Naive thymus-derived CD4-positive, alpha-beta T cell (primary cell): ENCODE measurements at regions of chr7 and their contacts with region 1.

Region 1: GRCh38 chr7:138459413-138460175 is 465 bp upstream of the TRIM24 start:
- DNase-seq: peak; percentile 95 to 99 (median 98)
- ATAC-seq: peak; percentile 92
- H3K4me3 ChIP-seq: peak overlapping the region; percentile 35
- H3K4me3 Mint-ChIP-seq: peak overlapping the region; percentile 78 to 96 (median 87)
- H3K27ac ChIP-seq: peak overlapping the region; percentile 34
- H3K27ac Mint-ChIP-seq: peak overlapping the region; percentile 0 to 83 (median 61)
- H3K4me1 ChIP-seq: peaks cover 6 to 9% of the 10 kb centered on the region in 2 donors
- H3K4me1 Mint-ChIP-seq: peaks cover 14 to 38% (median 31%) of the 10 kb centered on the region in 7 donors
- H3K27me3 ChIP-seq: no peaks in the 10 kb centered on the region
- H3K27me3 Mint-ChIP-seq: peaks cover 0 to 2% (median 0%) of the 10 kb centered on the region in 5 donors

Region 2: GRCh38 chr7:138002096-138002827 is 457.3 kb before region 1 on chr7:
- CTCF ChIA-PET with region 1: no interaction called
- POLR2A ChIA-PET with region 1: no interaction called
- intact Hi-C with region 1: loop called (anchors 1 kb)
- DNase-seq: peak; percentile 95 to 98 (median 97)
- ATAC-seq: peak; percentile 95
- H3K4me3 ChIP-seq: peak overlapping the region; percentile 99
- H3K4me3 Mint-ChIP-seq: peak overlapping the region; percentile 89 to 96 (median 94)
- H3K27ac ChIP-seq: peak overlapping the region; percentile 79
- H3K27ac Mint-ChIP-seq: peak overlapping the region; percentile 67 to 95 (median 89)
- H3K4me1 ChIP-seq: peaks cover 6 to 14% of the 10 kb centered on the region in 2 donors
- H3K4me1 Mint-ChIP-seq: peaks cover 9 to 54% (median 45%) of the 10 kb centered on the region in 7 donors
- H3K27me3 ChIP-seq: no peaks in the 10 kb centered on the region
- H3K27me3 Mint-ChIP-seq: no peaks in the 10 kb centered on the region

Region 3: DNA sequence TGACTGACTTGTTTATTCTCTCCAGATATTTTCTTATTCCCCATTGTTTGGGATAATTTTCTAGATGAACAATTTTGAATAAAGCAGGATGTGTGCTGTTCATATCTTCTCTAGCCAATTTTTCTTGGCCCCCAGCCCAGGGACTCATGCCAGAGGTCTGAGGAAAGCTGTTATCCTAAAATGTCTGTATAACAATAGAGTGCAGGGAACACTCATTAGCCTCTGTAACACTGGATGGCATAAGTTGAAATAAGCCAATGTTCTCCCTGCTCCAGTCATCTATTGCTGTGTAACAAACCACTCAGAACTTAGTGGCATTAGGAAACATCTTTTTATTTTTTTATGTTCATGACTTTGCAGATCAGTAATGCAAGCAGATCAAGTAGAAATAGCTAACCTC is 121.2 kb before region 1 on chr7:
- CTCF ChIA-PET with region 1: no interaction called
- POLR2A ChIA-PET with region 1: no interaction called
- intact Hi-C with region 1: no loop called
- DNase-seq: no peak
- ATAC-seq: no peak
- H3K4me3 ChIP-seq: no peak overlapping the region
- H3K4me3 Mint-ChIP-seq: no peak overlapping the region
- H3K27ac ChIP-seq: no peak overlapping the region
- H3K27ac Mint-ChIP-seq: no peak overlapping the region
- H3K4me1 ChIP-seq: no peaks in the 10 kb centered on the region
- H3K4me1 Mint-ChIP-seq: no peaks in the 10 kb centered on the region
- H3K27me3 ChIP-seq: no peaks in the 10 kb centered on the region
- H3K27me3 Mint-ChIP-seq: peaks cover 0 to 10% (median 9%) of the 10 kb centered on the region in 5 donors

Region 4: DNA sequence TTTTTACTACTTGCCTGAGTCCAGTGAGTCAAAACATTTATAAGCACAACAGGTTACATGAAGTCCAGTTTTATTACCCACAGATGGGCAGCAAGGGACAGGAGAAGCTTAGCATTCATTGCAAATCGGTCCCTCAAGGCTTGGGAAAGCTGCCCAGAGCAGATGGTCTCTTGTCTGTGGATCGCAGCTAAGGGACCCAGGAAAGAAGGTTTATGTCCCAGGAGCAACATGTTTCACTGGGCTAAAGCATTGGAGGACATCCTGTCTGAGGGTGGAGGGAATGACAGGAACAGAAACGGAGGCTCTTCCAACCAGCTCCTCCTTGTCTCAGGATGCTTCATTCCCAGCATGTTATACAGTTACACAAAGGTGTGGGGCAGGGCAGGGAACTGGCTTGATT is 39.7 kb after region 1 on chr7:
- CTCF ChIA-PET with region 1: no interaction called
- POLR2A ChIA-PET with region 1: no interaction called
- intact Hi-C with region 1: no loop called
- DNase-seq: no peak
- ATAC-seq: no peak
- H3K4me3 ChIP-seq: no peak overlapping the region
- H3K4me3 Mint-ChIP-seq: peak overlapping the region in 1 of 10 donors; percentile 21
- H3K27ac ChIP-seq: no peak overlapping the region
- H3K27ac Mint-ChIP-seq: no peak overlapping the region
- H3K4me1 ChIP-seq: no peaks in the 10 kb centered on the region
- H3K4me1 Mint-ChIP-seq: peaks cover 0 to 62% (median 55%) of the 10 kb centered on the region in 7 donors
- H3K27me3 ChIP-seq: no peaks in the 10 kb centered on the region
- H3K27me3 Mint-ChIP-seq: no peaks in the 10 kb centered on the region

Region 5: GRCh38 chr7:138510003-138510402 is 50.4 kb after region 1 on chr7:
- CTCF ChIA-PET with region 1: no interaction called
- POLR2A ChIA-PET with region 1: no interaction called
- intact Hi-C with region 1: loop called in 1 of 2 experiments (anchors 5 kb)
- DNase-seq: no peak
- ATAC-seq: no peak
- H3K4me3 ChIP-seq: no peak overlapping the region
- H3K4me3 Mint-ChIP-seq: no peak overlapping the region
- H3K27ac ChIP-seq: no peak overlapping the region
- H3K27ac Mint-ChIP-seq: peak overlapping the region in 3 of 9 donors; percentile 4 to 58 (median 41)
- H3K4me1 ChIP-seq: no peaks in the 10 kb centered on the region
- H3K4me1 Mint-ChIP-seq: peaks cover 11 to 58% (median 45%) of the 10 kb centered on the region in 7 donors
- H3K27me3 ChIP-seq: no peaks in the 10 kb centered on the region
- H3K27me3 Mint-ChIP-seq: no peaks in the 10 kb centered on the region

Region 6: GRCh38 chr7:138584696-138585095 is 125.1 kb after region 1 on chr7:
- CTCF ChIA-PET with region 1: no interaction called
- POLR2A ChIA-PET with region 1: no interaction called
- intact Hi-C with region 1: loop called in 1 of 2 experiments (anchors 5 kb)
- DNase-seq: no peak
- ATAC-seq: no peak
- H3K4me3 ChIP-seq: no peak overlapping the region
- H3K4me3 Mint-ChIP-seq: no peak overlapping the region
- H3K27ac ChIP-seq: no peak overlapping the region
- H3K27ac Mint-ChIP-seq: peak overlapping the region in 1 of 9 donors; percentile 56
- H3K4me1 ChIP-seq: no peaks in the 10 kb centered on the region
- H3K4me1 Mint-ChIP-seq: peaks cover 0 to 4% (median 0%) of the 10 kb centered on the region in 7 donors
- H3K27me3 ChIP-seq: no peaks in the 10 kb centered on the region
- H3K27me3 Mint-ChIP-seq: no peaks in the 10 kb centered on the region

Region 7: DNA sequence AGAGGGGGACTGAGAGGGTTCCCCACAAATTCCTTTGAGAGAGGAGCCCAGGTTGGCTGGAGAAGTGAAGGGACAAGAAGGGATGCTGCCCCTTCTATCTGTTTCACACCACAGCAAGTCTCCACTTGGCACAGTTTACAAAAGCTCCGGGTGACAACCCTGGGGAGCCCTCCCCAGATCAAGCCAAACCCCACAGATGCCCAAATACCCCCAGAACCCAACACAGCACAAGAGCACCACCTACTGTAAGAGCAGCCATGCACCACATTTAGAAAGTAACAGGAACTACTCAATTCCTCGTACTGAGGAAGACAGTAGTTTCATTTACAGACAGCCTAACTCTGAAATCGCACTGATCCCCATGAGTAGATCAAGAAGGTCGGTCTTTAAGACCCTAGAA is 406.2 kb after region 1 on chr7:
- CTCF ChIA-PET with region 1: no interaction called
- POLR2A ChIA-PET with region 1: no interaction called
- intact Hi-C with region 1: loop called (anchors 2 to 5 kb)
- DNase-seq: peak in 8 of 9 donors; percentile 21 to 62 (median 49)
- ATAC-seq: peak; percentile 84
- H3K4me3 ChIP-seq: no peak overlapping the region
- H3K4me3 Mint-ChIP-seq: no peak overlapping the region
- H3K27ac ChIP-seq: no peak overlapping the region
- H3K27ac Mint-ChIP-seq: peak overlapping the region in 7 of 9 donors; percentile 0 to 69 (median 40)
- H3K4me1 ChIP-seq: no peaks in the 10 kb centered on the region
- H3K4me1 Mint-ChIP-seq: peaks cover 0 to 18% (median 7%) of the 10 kb centered on the region in 7 donors
- H3K27me3 ChIP-seq: no peaks in the 10 kb centered on the region
- H3K27me3 Mint-ChIP-seq: peaks cover 0 to 4% (median 2%) of the 10 kb centered on the region in 5 donors

Region 8: DNA sequence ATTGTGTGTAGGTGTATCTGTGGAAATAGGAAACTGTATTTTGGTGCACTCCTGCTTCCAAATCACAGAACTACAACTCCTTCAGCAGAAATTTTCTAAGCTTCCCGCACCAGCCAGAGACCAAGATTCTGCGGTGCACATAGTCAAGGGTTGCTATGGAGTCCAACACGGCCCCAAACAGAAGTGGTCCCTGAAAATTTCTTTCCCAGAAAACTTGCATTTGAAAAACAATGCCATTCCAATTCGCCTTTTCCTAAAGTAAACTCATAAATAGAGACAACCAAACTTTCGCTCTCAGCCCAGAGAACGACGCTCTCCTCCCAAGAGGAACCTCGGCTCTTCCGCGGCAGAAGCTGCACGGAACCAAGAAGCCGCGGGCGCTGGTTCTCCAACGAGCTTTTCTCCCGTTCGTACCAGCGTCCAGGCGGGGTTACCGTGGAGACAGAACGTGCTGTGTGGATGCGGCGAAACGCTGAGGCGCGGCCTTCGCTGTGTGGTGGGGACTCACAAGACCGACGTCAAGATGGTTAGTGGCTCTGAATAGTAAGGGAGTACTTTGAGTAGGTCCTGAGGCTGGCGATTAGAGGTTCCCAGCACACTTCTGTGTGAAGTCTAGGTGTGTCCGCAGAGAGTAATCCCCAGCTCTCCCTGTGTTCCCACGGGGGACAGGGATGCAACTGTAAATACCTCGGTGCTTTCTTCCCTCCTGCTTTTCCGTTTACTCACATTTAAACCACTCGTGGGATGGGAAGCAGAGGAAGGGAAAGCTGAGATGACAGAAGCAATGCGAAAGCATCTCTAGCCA is 673.9 kb after region 1 on chr7:
- CTCF ChIA-PET with region 1: no interaction called
- POLR2A ChIA-PET with region 1: no interaction called
- intact Hi-C with region 1: loop called in 1 of 2 experiments (anchors 1 kb)
- DNase-seq: peak; percentile 68 to 86 (median 83)
- ATAC-seq: peak; percentile 98
- H3K4me3 ChIP-seq: peak overlapping the region; percentile 86
- H3K4me3 Mint-ChIP-seq: peak overlapping the region; percentile 85 to 96 (median 90)
- H3K27ac ChIP-seq: peak overlapping the region; percentile 72
- H3K27ac Mint-ChIP-seq: peak overlapping the region; percentile 76 to 95 (median 85)
- H3K4me1 ChIP-seq: peaks cover 0 to 10% of the 10 kb centered on the region in 2 donors
- H3K4me1 Mint-ChIP-seq: peaks cover 11 to 33% (median 16%) of the 10 kb centered on the region in 7 donors
- H3K27me3 ChIP-seq: no peaks in the 10 kb centered on the region
- H3K27me3 Mint-ChIP-seq: peaks cover 0 to 5% (median 0%) of the 10 kb centered on the region in 5 donors

Region 9: DNA sequence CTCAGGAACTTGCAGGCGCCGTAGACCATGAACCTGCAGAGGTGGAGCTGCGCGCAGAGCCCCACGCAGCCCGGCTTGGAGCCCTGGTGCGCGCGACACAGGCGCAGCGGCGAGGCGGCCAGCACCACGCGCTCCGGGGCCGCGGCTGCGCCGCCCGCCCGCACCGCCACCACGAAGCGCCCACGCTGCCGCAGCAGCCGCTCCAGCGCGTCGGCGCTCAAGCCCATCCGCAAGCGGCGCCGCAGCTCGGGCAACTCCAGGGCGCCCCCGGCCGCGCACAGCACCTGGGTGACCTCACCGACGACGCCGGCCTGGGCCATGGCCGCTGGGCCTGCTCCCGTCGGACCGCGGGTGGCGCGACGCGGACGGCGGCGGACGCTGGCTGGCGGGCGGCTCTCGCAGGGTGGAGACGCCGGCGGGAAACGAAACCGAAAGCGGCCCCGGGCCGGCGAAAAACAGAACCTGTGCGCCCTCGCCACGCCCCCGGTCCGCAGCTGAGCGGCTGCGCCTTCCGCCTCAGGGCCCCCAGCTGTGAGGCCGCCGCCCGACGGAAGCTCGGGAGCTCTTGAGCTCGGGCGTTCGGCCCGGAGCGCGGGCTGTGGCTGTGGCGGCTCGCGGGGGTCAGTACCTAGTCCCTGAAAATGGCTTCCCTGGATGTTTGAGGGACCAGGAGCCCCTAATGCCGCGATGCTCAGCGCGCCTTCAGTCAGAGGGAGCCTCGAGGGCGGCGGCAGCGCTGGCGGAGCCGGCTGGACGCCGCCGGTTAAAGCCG is 1603.1 kb after region 1 on chr7 and contains the start of gene PARP12:
- CTCF ChIA-PET with region 1: no interaction called
- POLR2A ChIA-PET with region 1: no interaction called
- intact Hi-C with region 1: loop called in 1 of 2 experiments (anchors 5 kb)
- DNase-seq: peak; percentile 77 to 86 (median 83)
- ATAC-seq: peak; percentile 91
- H3K4me3 ChIP-seq: peak within 1 kb of the TSS; percentile 79
- H3K4me3 Mint-ChIP-seq: peak within 1 kb of the TSS; percentile 79 to 94 (median 90)
- H3K27ac ChIP-seq: peak within 1 kb of the TSS; percentile 81
- H3K27ac Mint-ChIP-seq: peak within 1 kb of the TSS; percentile 83 to 95 (median 92)
- H3K4me1 ChIP-seq: peaks cover 32 to 38% of the 10 kb centered on the region in 2 donors
- H3K4me1 Mint-ChIP-seq: peaks cover 34 to 55% (median 48%) of the 10 kb centered on the region in 7 donors
- H3K27me3 ChIP-seq: no peaks in the 10 kb centered on the region
- H3K27me3 Mint-ChIP-seq: peaks cover 0 to 7% (median 0%) of the 10 kb centered on the region in 5 donors
- total RNA-seq, gene PARP12: 66.2 to 145 (median 94.5) TPM